Lower leg skin (tissue), 4 donors: ENCODE measurements at regions of chr18 and their contacts with region 1.

Region 1: GRCh38 chr18:78178812-78179211 is 800.8 kb upstream of the SALL3 start:
- DNase-seq: no peak
- H3K4me3 ChIP-seq: no peak overlapping the region
- CTCF ChIP-seq: no peak
- POLR2A ChIP-seq: no peak

Region 2: GRCh38 chr18:78113136-78113939 is 65.5 kb before region 1 on chr18:
- intact Hi-C with region 1: loop called (anchors 10 kb)
- DNase-seq: peak in 1 of 2 donors; percentile 68
- H3K4me3 ChIP-seq: no peak overlapping the region
- CTCF ChIP-seq: no peak
- POLR2A ChIP-seq: no peak